ENCODE measurements at regions of chr14 and their contacts with region 1.

Region 1: GRCh38 chr14:71556742-71557141 is 375.5 kb upstream of the RGS6 start:
- DNase-seq: no peak
- H3K4me3 ChIP-seq: no peak overlapping the region
- CTCF ChIP-seq: no peak
- POLR2A ChIP-seq: no peak

Region 2: DNA sequence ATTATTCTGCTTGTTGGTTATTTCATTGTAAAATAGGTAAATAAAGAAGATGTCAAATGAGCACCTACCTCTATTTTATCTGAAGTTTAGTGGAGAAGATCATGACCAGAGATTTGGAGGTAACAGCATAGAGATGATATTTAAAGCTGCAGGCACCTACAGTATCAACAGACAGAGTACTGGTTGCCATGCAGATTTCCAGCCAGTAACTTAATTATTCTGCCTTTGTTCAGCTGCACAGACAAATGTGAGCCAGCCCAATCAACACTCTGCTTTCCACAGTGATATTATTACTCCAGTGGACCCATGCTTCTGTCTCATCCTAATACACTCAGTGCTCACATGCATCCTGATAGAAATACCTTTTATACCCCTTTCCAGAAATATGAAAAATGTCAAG is 27.0 kb after region 1 on chr14:
- intact Hi-C with region 1: loop called (anchors 1 kb)
- DNase-seq: no peak
- H3K4me3 ChIP-seq: no peak overlapping the region
- CTCF ChIP-seq: no peak
- POLR2A ChIP-seq: no peak

Region 3: DNA sequence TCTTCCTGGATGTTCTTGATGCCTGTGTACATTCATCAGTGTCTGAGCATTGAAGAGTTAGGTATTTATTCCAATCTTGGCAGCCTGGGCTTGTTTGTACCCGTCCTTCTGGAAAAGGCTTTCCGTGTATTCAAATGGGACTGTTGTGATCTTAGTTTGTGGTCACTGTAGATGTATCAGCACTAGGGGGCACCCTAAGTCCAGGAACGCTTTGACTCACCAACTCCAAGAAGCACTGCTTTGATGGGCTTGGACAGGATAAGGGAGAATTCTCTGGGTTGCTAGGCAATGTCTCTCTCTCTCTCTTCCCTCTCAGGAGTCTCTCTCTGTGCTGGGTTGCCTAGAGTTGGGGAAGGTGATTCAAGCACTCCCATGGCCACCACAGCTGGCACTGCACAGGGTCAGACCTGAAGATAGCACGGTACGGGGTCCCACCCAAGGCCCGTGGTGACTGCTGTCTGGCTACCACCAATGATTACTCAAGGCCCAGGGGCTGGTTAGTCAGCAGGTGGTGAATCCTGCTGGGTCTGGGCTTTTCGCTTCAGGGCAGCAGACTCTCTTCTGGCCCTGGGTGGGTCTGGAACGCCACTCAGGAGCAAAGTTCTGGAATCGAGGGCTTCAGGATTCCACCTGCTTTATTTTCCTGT is 164.4 kb after region 1 on chr14:
- intact Hi-C with region 1: no loop called
- DNase-seq: no peak
- H3K4me3 ChIP-seq: no peak overlapping the region
- CTCF ChIP-seq: no peak
- POLR2A ChIP-seq: no peak

Measured in lower leg skin (tissue), 4 donors.